Motor neuron (in vitro differentiated cells): ENCODE measurements at regions of chr4 and their contacts with region 1.

Region 1: DNA sequence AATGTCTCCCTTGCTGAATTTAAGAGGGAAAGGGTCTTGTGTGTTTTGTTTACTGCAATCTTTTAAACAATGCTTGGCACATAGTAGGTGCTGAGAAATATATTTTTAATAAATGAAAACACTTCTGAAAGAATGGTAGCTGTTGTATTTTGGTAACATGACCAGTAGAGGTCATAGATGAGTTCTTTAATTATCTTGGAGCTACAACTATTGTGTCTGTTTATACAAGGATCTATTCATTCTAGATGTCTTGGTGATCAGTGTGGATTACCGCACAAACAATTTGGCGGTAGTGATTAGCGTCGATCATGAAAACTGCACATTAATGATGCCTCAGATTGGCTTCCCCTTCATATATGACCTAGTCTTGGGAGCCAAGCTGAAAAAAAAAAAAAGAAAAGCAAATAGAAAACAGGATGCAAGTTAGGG is 21.4 kb upstream of the SCRG1 start:
- ATAC-seq: peak in 4 of 8 experiments; percentile 41 to 65 (median 50)
- H3K4me3 ChIP-seq: no peak overlapping the region
- H3K27ac ChIP-seq: no peak overlapping the region
- H3K4me1 ChIP-seq: no peaks in the 10 kb centered on the region

Region 2: GRCh38 chr4:173091362-173091761 is 329.0 kb before region 1 on chr4:
- in situ Hi-C with region 1: no loop called
- ATAC-seq: no peak
- H3K4me3 ChIP-seq: no peak overlapping the region
- H3K27ac ChIP-seq: no peak overlapping the region
- H3K4me1 ChIP-seq: peaks cover 3 to 9% of the 10 kb centered on the region in 2 donors

Region 3: GRCh38 chr4:173301518-173302201 is 118.7 kb before region 1 on chr4:
- in situ Hi-C with region 1: loop called in 3 of 9 experiments (anchors 25 kb)
- ATAC-seq: peak in 7 of 8 experiments; percentile 14 to 100 (median 99)
- H3K4me3 ChIP-seq: no peak overlapping the region
- H3K27ac ChIP-seq: no peak overlapping the region
- H3K4me1 ChIP-seq: peaks cover 0 to 23% of the 10 kb centered on the region in 2 donors

Region 4: DNA sequence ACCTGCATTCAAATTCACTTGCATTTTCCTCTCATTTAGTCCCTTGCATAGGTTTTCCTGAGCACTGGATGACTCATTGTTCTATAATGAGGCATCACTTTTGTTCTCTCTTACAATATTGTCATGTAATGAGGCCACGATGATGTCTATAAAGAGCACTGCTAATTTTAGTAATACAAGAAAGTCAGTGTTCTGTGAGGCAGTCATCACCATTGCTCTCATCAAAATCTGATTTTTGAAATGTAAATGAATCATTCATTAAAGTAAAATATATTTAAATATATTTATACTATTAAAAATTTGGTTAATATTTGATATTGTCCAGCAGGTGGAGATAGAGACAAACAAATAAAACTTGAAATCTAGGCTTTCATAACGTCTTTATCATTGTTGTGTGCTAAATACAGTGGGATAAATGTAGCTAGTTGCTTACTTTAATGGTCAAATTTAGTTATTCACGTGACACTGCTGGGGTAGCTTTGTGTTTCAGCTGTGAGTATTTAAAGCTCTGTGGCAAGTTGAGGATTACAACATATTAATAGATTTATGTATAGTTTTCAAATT is 101.6 kb before region 1 on chr4:
- in situ Hi-C with region 1: loop called in 6 of 9 experiments (anchors 10 to 25 kb)
- ATAC-seq: peak; percentile 34 to 94 (median 82)
- H3K4me3 ChIP-seq: no peak overlapping the region
- H3K27ac ChIP-seq: no peak overlapping the region
- H3K4me1 ChIP-seq: peaks cover 0 to 4% of the 10 kb centered on the region in 2 donors

Region 5: DNA sequence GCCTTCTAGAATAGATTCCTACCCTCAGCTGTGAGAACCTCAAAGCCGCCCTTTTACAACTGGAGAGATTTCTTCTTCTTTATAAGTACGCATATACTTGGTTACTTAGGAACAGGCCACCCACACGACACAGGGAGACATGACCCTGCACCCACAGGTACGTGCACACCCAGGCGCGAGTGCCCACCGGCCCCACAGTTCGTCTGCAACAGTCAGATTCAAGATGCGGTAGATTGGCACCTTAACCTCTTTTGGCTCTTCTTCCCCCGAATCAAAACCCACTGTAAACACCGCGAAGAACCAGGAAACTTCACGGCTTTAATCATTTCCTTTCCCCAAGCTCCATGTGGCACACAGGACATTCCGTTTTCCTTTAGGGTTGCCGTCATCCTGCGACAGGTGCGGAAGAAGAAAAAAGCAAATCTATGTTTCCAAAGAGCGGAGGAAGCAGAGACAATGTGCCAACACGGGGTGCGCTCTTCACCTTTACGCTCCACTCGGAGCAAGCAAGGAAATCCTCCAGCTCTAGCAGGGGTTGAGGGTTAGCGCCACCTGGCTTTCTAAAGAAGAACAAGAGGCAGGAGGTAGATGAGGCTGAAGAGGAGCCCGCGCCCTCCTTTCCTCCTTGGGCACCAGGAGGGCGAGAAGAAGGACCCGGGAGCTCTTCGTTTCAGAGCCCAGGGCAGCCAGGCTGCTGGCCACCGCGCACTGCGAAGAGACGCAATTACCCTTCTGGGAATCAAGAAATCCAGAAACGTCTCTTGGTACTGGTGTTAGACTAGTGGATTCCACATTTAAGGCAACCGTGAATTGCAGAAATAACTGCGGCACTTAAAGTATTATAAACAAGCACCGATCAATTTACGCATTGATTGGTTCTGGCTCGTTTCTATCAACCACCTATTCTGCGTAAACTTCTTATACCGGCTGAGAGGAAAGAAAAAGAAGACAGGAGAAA is 74.0 kb after region 1 on chr4:
- in situ Hi-C with region 1: loop called in 1 of 9 experiments (anchors 10 kb)
- ATAC-seq: peak; percentile 62 to 89 (median 74)
- H3K4me3 ChIP-seq: peak overlapping the region; percentile 17 to 35 (median 19)
- H3K27ac ChIP-seq: no peak overlapping the region
- H3K4me1 ChIP-seq: no peaks in the 10 kb centered on the region